Activated CD4-positive, alpha-beta memory T cell treated with anti-CD3 and anti-CD28 coated beads, Interleukin-2, amount 10 ng/mL, durations not matched to agents 7 days and 5 days (primary cell): ENCODE measurements at regions of chr1 and their contacts with region 1.

Region 1: DNA sequence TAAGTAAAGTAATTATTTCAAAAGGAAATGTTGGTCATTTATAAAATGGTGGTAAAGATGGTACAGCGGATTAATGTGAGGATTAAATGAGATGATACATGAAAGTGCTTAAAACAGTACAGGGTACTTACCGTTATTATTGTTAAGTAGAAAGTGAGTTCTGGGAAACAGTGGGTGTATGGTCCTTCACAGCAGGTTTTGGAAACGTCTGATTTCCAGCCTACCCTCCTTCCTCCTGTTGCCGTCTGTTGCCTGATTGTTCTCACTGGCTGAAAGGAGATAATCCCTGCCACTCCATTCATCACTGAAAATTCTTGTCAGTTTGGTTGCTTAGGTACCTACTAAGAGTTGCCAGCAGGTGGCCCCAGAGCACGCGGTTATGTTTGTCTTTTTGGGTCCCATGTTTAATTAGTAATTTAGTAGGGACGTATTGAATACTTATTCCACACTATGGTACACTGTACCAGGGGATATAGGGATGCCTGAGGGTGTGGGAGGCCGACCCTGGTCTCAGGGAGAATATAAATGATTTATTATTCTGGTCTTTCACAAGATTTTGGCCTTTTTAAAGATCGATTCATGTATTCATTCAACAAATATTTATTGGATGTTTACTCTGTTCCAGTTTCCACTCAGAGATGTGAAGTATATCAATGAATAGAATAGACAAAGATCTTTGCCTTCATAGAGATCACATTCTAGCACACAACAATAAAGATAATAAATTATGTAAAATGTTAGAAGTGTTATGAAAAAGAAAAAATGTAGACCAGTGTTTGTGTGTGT is 30.8 kb upstream of the RPTN start:
- DNase-seq: peak; percentile 71
- H3K4me3 Mint-ChIP-seq: peak overlapping the region; percentile 68
- H3K27ac Mint-ChIP-seq: no peak overlapping the region
- H3K4me1 Mint-ChIP-seq: peaks cover 9% of the 10 kb centered on the region
- H3K27me3 Mint-ChIP-seq: peaks cover 39% of the 10 kb centered on the region

Region 2: GRCh38 chr1:152047730-152048402 is 142.0 kb before region 1 on chr1:
- CTCF ChIA-PET with region 1: interaction called, 174 read pairs
- POLR2A ChIA-PET with region 1: interaction called, 4 read pairs
- DNase-seq: peak; percentile 93
- H3K4me3 Mint-ChIP-seq: peak overlapping the region; percentile 73
- H3K27ac Mint-ChIP-seq: peak overlapping the region; percentile 97
- H3K4me1 Mint-ChIP-seq: peaks cover 55% of the 10 kb centered on the region
- H3K27me3 Mint-ChIP-seq: peaks cover 4% of the 10 kb centered on the region

Region 3: DNA sequence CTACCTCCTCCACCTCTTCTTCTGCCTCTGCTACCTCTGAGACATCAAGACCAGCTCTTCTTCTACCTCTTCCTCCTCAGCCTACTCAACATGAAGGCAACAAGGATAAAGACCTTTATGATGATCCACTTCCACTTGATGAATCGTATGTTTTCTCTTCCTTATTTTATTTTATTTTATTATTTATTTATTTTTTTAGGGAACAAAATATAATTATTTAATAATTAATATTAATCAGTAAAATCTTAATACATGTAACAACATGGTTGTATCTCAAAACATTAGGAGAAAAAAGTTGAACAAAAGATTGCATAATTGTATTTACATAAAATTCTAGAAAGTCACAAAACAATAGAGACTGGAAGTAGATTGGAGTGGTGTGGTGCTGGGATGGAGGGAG is 47.2 kb after region 1 on chr1:
- CTCF ChIA-PET with region 1: no interaction called
- POLR2A ChIA-PET with region 1: no interaction called
- DNase-seq: no peak
- H3K4me3 Mint-ChIP-seq: no peak overlapping the region
- H3K27ac Mint-ChIP-seq: no peak overlapping the region
- H3K4me1 Mint-ChIP-seq: no peaks in the 10 kb centered on the region
- H3K27me3 Mint-ChIP-seq: peaks cover 27% of the 10 kb centered on the region

Region 4: GRCh38 chr1:152347116-152347728 is 157.4 kb after region 1 on chr1:
- CTCF ChIA-PET with region 1: interaction called, 10 read pairs
- POLR2A ChIA-PET with region 1: no interaction called
- DNase-seq: peak; percentile 33
- H3K4me3 Mint-ChIP-seq: no peak overlapping the region
- H3K27ac Mint-ChIP-seq: no peak overlapping the region
- H3K4me1 Mint-ChIP-seq: no peaks in the 10 kb centered on the region
- H3K27me3 Mint-ChIP-seq: peaks cover 23% of the 10 kb centered on the region